ENCODE measurements at regions of chr1 and their contacts with region 1.

Region 1: DNA sequence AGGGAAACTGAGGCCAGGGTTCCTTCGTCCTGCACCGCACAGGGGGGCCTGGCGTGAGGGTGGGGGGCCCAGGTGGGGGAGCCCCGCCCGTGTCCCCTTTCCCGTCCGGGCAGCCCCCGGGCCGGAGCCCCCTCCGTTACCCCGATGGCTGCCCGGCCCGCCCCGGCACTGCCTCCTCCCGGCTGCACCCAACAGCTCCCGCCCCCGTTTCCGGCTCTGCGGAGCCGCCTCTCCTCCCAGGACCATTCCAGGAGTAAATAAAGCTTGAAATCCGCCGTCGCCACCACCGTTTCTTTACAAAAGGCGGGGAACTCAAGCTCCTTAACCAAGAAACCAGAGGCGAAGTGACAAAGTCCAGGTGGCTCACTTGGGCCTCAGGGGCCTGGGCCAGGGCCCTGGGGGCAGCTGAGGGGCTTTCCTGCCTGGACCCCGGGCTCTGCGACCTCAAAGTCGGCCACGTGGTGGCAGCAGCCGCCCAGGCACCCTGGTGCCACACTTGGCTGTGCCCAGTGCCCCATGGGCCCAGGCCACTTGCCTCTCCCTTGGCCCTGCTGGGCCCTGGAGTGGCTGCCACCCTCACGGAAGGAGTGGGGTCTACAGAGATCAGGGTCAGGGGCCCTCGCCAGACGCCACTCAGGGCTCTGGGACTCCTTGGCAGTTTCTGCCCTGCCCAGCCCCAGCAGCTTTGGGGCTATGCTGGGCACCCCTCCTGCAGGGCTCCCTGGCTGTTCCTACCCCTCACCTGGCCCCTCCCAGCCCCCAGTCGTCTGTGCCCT is 514 bp upstream of the FAAP20 start:
- DNase-seq: peak; percentile 92
- ATAC-seq: peak; percentile 62
- H3K4me3 ChIP-seq: peak overlapping the region; percentile 61
- H3K27ac ChIP-seq: peak overlapping the region; percentile 23
- H3K4me1 ChIP-seq: peaks cover 58% of the 10 kb centered on the region
- H3K27me3 ChIP-seq: no peaks in the 10 kb centered on the region
- CTCF ChIP-seq: peak; percentile 99

Region 2: GRCh38 chr1:1019122-1019999 is 1175.7 kb before region 1 on chr1:
- CTCF ChIA-PET with region 1: no interaction called
- POLR2A ChIA-PET with region 1: interaction called, 11 read pairs
- intact Hi-C with region 1: no loop called
- DNase-seq: peak; percentile 96
- ATAC-seq: peak; percentile 56
- H3K4me3 ChIP-seq: peak overlapping the region; percentile 37; the same call in 1 of the 2 replicates
- H3K27ac ChIP-seq: no peak overlapping the region
- H3K4me1 ChIP-seq: peaks cover 44% of the 10 kb centered on the region
- H3K27me3 ChIP-seq: no peaks in the 10 kb centered on the region
- CTCF ChIP-seq: peak; percentile 50

Region 3: DNA sequence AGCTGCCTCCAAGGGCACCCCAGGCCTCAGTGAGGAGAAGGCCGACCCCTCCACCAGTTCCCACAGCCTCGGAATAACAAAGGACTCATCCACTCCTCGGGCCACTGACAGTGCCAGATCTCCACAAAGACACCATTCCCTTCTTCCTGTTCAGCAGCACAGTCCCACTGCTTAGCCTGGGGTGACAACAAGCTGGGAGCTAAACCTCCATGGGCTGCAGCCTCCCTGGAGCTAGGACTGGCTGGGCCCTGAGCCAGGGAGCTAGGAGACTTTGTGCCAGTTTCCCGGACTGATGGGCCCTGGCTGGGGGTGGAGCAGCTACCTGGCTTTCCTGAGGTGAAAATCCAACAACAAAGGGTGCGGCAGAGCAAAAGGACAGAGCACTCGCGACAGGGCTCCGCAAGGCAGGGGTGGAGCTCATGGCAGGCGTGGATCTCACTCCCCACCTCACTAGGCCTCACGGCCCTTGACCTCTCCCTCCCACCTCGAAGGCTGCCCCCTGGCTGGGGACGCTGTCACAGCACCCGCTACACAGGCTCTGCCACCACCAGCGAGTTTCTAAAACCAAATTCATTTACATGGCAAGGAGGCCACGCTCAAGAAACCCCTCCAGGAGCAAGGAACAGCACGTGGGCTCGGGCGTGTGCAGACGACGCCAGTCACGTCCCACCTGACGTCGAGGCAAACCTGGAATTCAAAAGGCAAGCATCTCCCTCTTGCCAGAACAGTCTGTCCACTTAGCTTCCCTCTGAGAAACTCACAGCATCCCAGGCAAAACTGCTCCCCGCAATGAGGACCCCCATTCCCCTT is 516.3 kb before region 1 on chr1:
- CTCF ChIA-PET with region 1: no interaction called
- POLR2A ChIA-PET with region 1: no interaction called
- intact Hi-C with region 1: no loop called
- DNase-seq: peak; percentile 9
- ATAC-seq: peak; percentile 50
- H3K4me3 ChIP-seq: no peak overlapping the region
- H3K27ac ChIP-seq: no peak overlapping the region
- H3K4me1 ChIP-seq: no peaks in the 10 kb centered on the region
- H3K27me3 ChIP-seq: no peaks in the 10 kb centered on the region
- CTCF ChIP-seq: peak; percentile 63

Region 4: GRCh38 chr1:2227346-2228153 is 32.5 kb after region 1 on chr1:
- CTCF ChIA-PET with region 1: interaction called, 4 read pairs
- POLR2A ChIA-PET with region 1: interaction called, 34 read pairs
- intact Hi-C with region 1: loop called (anchors 5 kb)
- DNase-seq: peak; percentile 99
- ATAC-seq: peak; percentile 85
- H3K4me3 ChIP-seq: peak overlapping the region; percentile 79
- H3K27ac ChIP-seq: peak overlapping the region; percentile 60
- H3K4me1 ChIP-seq: peaks cover 20% of the 10 kb centered on the region
- H3K27me3 ChIP-seq: no peaks in the 10 kb centered on the region
- CTCF ChIP-seq: no peak

Region 5: DNA sequence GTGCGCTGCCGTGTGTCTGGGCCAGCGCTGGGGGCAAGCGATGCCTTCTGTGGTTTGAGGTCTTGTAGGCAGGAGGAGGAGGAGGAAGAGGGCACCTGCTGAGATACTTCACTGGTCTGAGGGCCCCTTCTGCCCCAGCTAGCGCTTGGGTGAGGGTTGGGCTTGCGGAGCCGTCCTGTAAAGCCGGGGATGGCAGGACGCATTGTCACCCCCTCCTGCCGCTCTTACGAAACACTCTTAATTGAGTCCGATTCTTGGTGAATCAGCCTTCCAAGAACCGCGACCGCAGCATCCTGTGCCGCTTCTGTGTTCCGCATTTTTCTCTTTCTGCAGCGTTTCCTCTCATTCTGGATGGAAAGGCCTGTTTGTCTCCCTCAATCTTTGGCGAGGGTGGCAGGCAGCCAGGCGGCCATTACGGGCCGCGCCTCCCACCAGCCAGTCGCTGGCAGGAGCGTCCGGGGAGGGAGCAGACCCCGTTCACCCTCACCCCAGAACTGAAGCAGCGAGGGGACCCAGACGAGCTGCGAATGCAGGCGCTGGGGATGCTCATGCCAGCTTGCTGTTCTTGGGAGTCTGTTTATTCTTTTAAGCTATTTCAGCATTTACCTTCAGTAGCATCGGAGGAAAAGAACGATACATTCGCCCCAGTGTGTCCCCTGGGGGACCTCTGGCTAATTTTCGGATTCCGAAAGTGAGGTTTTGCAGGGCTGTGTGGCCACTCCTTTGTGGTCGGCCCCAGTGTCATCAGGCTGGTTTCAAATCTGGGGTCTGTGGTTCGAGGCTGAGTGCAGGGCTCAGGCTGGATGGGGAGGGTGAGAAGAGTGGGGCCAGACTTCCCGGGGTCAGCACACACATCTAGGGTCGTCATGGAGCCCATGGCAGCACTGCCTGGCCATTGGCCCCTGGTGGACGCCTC is 95.8 kb after region 1 on chr1:
- CTCF ChIA-PET with region 1: no interaction called
- POLR2A ChIA-PET with region 1: interaction called, 14 read pairs
- intact Hi-C with region 1: no loop called
- DNase-seq: no peak
- ATAC-seq: no peak
- H3K4me3 ChIP-seq: no peak overlapping the region
- H3K27ac ChIP-seq: no peak overlapping the region
- H3K4me1 ChIP-seq: no peaks in the 10 kb centered on the region
- H3K27me3 ChIP-seq: no peaks in the 10 kb centered on the region
- CTCF ChIP-seq: no peak

Region 6: GRCh38 chr1:2381741-2382620 is 186.9 kb after region 1 on chr1:
- CTCF ChIA-PET with region 1: interaction called, 62 read pairs
- POLR2A ChIA-PET with region 1: interaction called, 3 read pairs
- intact Hi-C with region 1: loop called (anchors 1 kb)
- DNase-seq: peak; percentile 91
- ATAC-seq: peak; percentile 97
- H3K4me3 ChIP-seq: no peak overlapping the region
- H3K27ac ChIP-seq: no peak overlapping the region
- H3K4me1 ChIP-seq: no peaks in the 10 kb centered on the region
- H3K27me3 ChIP-seq: no peaks in the 10 kb centered on the region
- CTCF ChIP-seq: peak; percentile 99

Region 7: DNA sequence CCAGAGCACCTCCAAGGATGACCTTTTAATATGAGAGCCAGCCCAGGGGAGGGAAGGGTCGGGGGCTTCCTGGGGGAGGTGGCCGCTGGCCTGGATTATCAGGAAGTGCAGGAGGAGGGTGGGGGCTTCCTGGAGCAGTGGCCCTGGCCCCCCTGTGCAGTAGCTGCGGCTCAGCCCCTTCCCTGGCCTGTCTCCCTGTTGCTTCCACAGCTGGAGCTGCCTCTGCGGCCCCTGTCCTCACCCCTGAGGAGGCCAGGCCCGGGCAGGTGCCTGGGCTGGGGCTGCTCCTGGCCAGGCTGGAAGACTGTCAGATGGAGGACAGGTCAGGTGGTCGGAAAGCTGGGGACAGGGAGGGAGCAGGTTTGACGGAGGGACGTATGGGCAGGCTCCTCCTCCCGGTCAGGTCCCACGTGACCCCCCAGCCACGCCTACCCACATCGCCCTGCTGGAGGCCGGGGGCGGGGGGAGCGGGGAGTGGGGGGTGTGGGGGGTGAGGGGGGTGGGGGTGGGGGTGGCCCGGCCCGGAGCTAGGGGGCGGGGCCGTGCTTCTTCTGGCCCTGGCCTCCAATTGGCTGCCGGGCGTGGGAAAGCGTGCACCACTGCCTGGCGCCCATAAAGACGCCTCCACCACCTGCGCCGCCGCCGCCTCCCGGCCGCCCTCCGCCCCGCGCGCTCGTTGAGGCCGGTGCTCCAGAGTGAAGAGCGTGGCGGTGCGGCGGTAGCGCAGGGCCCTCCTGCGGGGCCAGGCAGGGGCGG is 350.9 kb after region 1 on chr1:
- CTCF ChIA-PET with region 1: no interaction called
- POLR2A ChIA-PET with region 1: no interaction called
- intact Hi-C with region 1: loop called (anchors 5 kb)
- DNase-seq: peak; percentile 95
- ATAC-seq: peak; percentile 64
- H3K4me3 ChIP-seq: peak overlapping the region; percentile 69
- H3K27ac ChIP-seq: peak overlapping the region; percentile 64
- H3K4me1 ChIP-seq: peaks cover 22% of the 10 kb centered on the region
- H3K27me3 ChIP-seq: no peaks in the 10 kb centered on the region
- CTCF ChIP-seq: no peak

Measured in PC-3 (cell line).